Body of pancreas (tissue), 4 donors: ENCODE measurements at regions of chr2 and their contacts with region 1.

Region 1: DNA sequence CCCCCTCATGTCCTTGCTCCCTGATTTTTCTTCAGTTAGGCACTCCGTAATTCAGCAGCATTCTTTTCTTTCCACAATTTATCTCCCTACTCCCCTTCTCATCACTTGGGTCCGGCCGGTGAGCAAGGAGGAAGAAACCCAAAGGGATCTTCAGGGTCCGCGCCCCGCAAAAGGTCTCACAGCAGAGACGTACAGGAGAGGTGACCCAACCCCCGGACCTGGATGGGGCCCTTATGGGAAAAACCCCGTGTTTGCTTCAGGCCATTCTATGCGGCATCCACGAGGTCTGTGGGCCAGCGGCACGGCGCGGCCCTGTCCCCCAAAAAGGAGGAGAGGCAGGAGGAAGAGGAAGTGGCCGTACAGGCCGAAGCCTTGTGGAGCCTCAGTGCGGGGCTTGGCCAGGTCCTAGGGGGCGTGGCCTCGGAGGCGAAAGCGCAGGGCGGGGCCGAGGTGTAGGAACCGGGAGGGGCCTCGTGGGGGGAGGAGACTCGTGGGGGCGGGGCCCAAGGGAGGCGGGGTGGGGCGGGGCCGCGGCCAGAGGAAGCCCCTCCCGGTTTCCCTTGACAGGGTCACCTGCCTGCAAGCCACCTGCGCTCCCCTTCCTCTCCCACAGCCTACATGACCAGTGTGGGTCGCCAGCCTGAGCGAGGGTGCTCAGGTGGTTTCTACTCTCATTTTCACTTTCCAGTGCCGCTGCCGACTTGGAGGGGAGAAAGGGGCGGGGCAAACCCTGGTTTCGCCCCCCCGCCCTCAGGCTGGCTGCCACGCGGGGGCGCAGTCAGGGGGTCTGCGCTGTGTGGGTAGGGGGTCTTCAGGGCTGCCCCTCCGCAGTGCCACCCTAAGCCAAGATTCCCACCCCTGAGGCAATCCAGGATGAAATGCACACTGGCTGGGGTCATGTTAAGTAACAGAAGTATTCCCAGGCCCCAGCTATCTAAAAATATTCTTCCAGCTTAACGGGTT is 156.4 kb upstream of the XPO1 start:
- DNase-seq: peak; percentile 96 to 98 (median 97)
- ATAC-seq: peak; percentile 96
- H3K4me3 ChIP-seq: peak overlapping the region; percentile 22 to 35
- H3K27ac ChIP-seq: peak overlapping the region; percentile 71 to 93 (median 84)
- H3K4me1 ChIP-seq: peaks cover 14% of the 10 kb centered on the region
- H3K27me3 ChIP-seq: no peaks in the 10 kb centered on the region
- CTCF ChIP-seq: peak; percentile 13 to 51 (median 31)
- POLR2A ChIP-seq: peak; percentile 49 to 91 (median 88)

Region 2: GRCh38 chr2:61670591-61671501 is 23.7 kb before region 1 on chr2:
- intact Hi-C with region 1: no loop called
- DNase-seq: peak; percentile 56 to 77 (median 68)
- ATAC-seq: peak; percentile 89
- H3K4me3 ChIP-seq: no peak overlapping the region
- H3K27ac ChIP-seq: peak overlapping the region; percentile 82 to 96 (median 90)
- H3K4me1 ChIP-seq: peaks cover 29% of the 10 kb centered on the region
- H3K27me3 ChIP-seq: no peaks in the 10 kb centered on the region
- CTCF ChIP-seq: peak in 1 of 7 experiments; percentile 7
- POLR2A ChIP-seq: peak in 2 of 3 donors; percentile 61 to 66

Region 3: GRCh38 chr2:61769093-61769675 is 74.6 kb after region 1 on chr2:
- intact Hi-C with region 1: loop called (anchors 5 kb)
- DNase-seq: no peak
- ATAC-seq: no peak
- H3K4me3 ChIP-seq: no peak overlapping the region
- H3K27ac ChIP-seq: no peak overlapping the region
- H3K4me1 ChIP-seq: peaks cover 7% of the 10 kb centered on the region
- H3K27me3 ChIP-seq: no peaks in the 10 kb centered on the region
- CTCF ChIP-seq: no peak
- POLR2A ChIP-seq: no peak

Region 4: GRCh38 chr2:61857224-61857623 is 162.6 kb after region 1 on chr2:
- intact Hi-C with region 1: no loop called
- DNase-seq: no peak
- ATAC-seq: no peak
- H3K4me3 ChIP-seq: no peak overlapping the region
- H3K27ac ChIP-seq: no peak overlapping the region
- H3K4me1 ChIP-seq: peaks cover 4% of the 10 kb centered on the region
- H3K27me3 ChIP-seq: no peaks in the 10 kb centered on the region
- CTCF ChIP-seq: no peak
- POLR2A ChIP-seq: no peak